CD4-positive, alpha-beta T cell (primary cell): ENCODE measurements at regions of chr7 and their contacts with region 1.

Region 1: DNA sequence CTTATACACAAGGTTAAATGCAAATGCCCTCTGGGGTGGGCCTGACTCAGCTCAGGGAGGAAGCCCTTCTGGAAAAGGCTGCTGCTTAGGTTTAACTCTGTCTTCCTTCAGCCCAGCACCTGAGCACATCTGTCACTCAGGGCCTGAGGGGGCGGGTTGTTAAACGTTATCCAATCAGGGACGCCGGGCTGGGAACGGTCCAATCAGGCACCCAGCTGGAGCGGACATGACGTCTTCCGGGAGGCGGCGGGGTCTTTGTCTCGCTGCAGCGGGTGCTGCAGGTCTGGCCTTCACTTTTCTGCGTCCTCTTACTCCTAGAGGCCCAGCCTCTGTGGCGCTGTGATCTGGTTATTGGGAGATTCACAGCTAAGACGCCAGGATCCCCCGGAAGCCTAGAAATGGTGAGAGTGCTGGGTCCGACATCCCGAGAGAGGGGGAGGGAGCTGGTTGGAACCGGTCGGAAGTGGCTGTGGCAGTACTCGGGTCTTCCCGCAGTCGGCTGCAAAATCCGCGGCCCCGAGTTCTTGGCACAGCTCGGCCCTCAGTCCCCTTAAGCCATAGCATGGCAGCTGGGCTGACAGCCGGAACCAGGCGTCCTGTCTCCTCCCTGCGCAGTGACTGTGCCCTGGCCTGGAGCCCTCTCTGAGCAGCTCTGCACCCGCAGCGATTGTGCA is at the start of gene ZNF138:
- DNase-seq: peak; percentile 86 to 96 (median 92)
- ATAC-seq: peak; percentile 99
- H3K4me3 ChIP-seq: peak within 1 kb of the TSS; percentile 98
- H3K4me3 Mint-ChIP-seq: peak within 1 kb of the TSS; percentile 98
- H3K27ac ChIP-seq: peak within 1 kb of the TSS; percentile 72 to 88
- H3K27ac Mint-ChIP-seq: peak within 1 kb of the TSS; percentile 98
- H3K4me1 ChIP-seq: peaks cover 27% of the 10 kb centered on the region
- H3K4me1 Mint-ChIP-seq: peaks cover 36% of the 10 kb centered on the region
- H3K27me3 ChIP-seq: no peaks in the 10 kb centered on the region
- H3K27me3 Mint-ChIP-seq: no peaks in the 10 kb centered on the region
- CTCF ChIP-seq: no peak
- total RNA-seq, gene ZNF138: 5.6 to 7.3 TPM

Region 2: GRCh38 chr7:64307254-64308015 is 486.9 kb before region 1 on chr7:
- CTCF ChIA-PET with region 1: no interaction called
- POLR2A ChIA-PET with region 1: interaction called, 15 read pairs
- intact Hi-C with region 1: loop called in 1 of 2 experiments (anchors 5 kb)
- DNase-seq: peak; percentile 89 to 98 (median 92)
- ATAC-seq: peak; percentile 98
- H3K4me3 ChIP-seq: peak overlapping the region; percentile 59
- H3K4me3 Mint-ChIP-seq: peak overlapping the region; percentile 98
- H3K27ac ChIP-seq: peak overlapping the region; percentile 65 to 83
- H3K27ac Mint-ChIP-seq: peak overlapping the region; percentile 96
- H3K4me1 ChIP-seq: peaks cover 13% of the 10 kb centered on the region
- H3K4me1 Mint-ChIP-seq: peaks cover 22% of the 10 kb centered on the region
- H3K27me3 ChIP-seq: no peaks in the 10 kb centered on the region
- H3K27me3 Mint-ChIP-seq: no peaks in the 10 kb centered on the region
- CTCF ChIP-seq: no peak

Region 3: GRCh38 chr7:64562626-64563275 is 231.6 kb before region 1 on chr7 and contains the start of gene ZNF680:
- CTCF ChIA-PET with region 1: no interaction called
- POLR2A ChIA-PET with region 1: interaction called, 6 read pairs
- intact Hi-C with region 1: loop called (anchors 5 kb)
- DNase-seq: peak; percentile 79 to 95 (median 84)
- ATAC-seq: peak; percentile 98
- H3K4me3 ChIP-seq: peak within 1 kb of the TSS; percentile 93
- H3K4me3 Mint-ChIP-seq: peak within 1 kb of the TSS; percentile 100
- H3K27ac ChIP-seq: peak within 1 kb of the TSS; percentile 41
- H3K27ac Mint-ChIP-seq: peak within 1 kb of the TSS; percentile 88
- H3K4me1 ChIP-seq: peaks cover 21% of the 10 kb centered on the region
- H3K4me1 Mint-ChIP-seq: peaks cover 41% of the 10 kb centered on the region
- H3K27me3 ChIP-seq: no peaks in the 10 kb centered on the region
- H3K27me3 Mint-ChIP-seq: no peaks in the 10 kb centered on the region
- CTCF ChIP-seq: no peak
- total RNA-seq, gene ZNF680: 8.3 to 8.9 TPM

Region 4: DNA sequence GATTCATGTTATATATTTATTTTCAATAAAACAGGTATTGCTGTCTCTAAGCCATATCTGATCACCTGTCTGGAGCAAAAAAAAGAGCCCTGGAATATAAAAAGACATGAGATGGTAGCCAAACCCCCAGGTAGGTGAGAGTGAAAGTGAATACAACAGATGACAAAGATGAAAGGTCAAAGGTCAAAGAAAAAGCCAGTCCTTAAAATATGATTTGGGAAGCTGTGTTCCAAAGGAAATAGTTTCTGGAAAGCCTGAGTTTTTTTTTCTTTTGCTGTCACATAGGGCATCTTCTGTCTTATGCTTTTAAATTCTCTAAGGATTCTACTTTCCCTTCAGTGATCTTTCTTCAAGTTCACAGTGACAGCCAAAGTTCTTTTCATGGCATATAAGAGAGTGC is 102.5 kb before region 1 on chr7:
- CTCF ChIA-PET with region 1: no interaction called
- POLR2A ChIA-PET with region 1: no interaction called
- intact Hi-C with region 1: loop called in 1 of 2 experiments (anchors 10 kb)
- DNase-seq: no peak
- ATAC-seq: no peak
- H3K4me3 ChIP-seq: no peak overlapping the region
- H3K4me3 Mint-ChIP-seq: no peak overlapping the region
- H3K27ac ChIP-seq: no peak overlapping the region
- H3K27ac Mint-ChIP-seq: peak overlapping the region; percentile 56
- H3K4me1 ChIP-seq: peaks cover 9% of the 10 kb centered on the region
- H3K4me1 Mint-ChIP-seq: peaks cover 13% of the 10 kb centered on the region
- H3K27me3 ChIP-seq: no peaks in the 10 kb centered on the region
- H3K27me3 Mint-ChIP-seq: no peaks in the 10 kb centered on the region
- CTCF ChIP-seq: no peak

Region 5: DNA sequence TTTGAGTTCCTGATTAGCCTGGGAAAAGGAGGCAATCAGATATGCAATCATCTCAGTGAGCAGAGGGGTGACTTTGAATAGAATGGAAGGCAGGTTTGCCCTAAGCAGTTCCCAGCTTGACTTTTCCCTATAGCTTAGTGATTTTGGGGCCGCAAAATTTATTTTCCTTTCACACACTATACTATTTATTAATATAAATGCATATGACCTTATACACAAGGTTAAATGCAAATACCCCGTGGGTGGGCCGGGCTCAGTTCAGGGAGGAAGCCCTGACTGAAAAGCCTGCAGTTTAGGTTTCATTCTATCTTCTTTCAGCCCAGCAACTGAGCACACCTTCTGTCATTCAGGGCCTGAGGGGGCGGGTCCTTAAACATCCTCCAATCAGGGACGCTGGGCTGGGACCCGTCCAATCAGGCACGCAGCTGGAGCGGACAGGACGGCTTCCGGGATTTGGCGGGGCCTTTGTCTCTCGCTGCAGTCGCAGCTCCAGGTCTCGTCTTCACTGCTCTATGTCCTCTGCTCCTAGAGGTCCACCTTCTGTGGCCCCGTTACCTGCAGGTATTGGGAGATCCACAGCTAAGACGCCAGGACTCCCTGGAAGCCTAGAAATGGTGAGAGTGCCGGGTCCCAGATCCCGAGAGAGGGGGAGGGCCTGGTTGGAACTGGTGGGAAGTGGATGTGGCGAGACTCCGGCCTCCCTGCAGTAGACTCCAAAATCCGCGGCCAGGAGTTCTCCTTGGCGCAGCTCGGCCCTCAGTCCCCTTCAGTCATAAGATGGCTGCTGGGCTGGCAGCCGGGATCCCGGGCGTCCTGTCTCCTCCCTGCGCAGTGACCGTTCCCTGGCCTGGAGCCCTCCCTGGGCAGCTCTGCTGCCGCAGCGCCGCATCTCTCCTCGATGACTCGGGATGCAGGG is 108.8 kb after region 1 on chr7 and contains the start of gene ZNF273:
- CTCF ChIA-PET with region 1: no interaction called
- POLR2A ChIA-PET with region 1: interaction called, 28 read pairs
- intact Hi-C with region 1: loop called (anchors 2 to 5 kb)
- DNase-seq: peak; percentile 83 to 95 (median 87)
- ATAC-seq: peak; percentile 99
- H3K4me3 ChIP-seq: peak within 1 kb of the TSS; percentile 81
- H3K4me3 Mint-ChIP-seq: peak within 1 kb of the TSS; percentile 99
- H3K27ac ChIP-seq: peak within 1 kb of the TSS; percentile 26 to 64
- H3K27ac Mint-ChIP-seq: peak within 1 kb of the TSS; percentile 94
- H3K4me1 ChIP-seq: peaks cover 14% of the 10 kb centered on the region
- H3K4me1 Mint-ChIP-seq: peaks cover 51% of the 10 kb centered on the region
- H3K27me3 ChIP-seq: no peaks in the 10 kb centered on the region
- H3K27me3 Mint-ChIP-seq: no peaks in the 10 kb centered on the region
- CTCF ChIP-seq: no peak
- total RNA-seq, gene ZNF273: 6.8 TPM

Region 6: DNA sequence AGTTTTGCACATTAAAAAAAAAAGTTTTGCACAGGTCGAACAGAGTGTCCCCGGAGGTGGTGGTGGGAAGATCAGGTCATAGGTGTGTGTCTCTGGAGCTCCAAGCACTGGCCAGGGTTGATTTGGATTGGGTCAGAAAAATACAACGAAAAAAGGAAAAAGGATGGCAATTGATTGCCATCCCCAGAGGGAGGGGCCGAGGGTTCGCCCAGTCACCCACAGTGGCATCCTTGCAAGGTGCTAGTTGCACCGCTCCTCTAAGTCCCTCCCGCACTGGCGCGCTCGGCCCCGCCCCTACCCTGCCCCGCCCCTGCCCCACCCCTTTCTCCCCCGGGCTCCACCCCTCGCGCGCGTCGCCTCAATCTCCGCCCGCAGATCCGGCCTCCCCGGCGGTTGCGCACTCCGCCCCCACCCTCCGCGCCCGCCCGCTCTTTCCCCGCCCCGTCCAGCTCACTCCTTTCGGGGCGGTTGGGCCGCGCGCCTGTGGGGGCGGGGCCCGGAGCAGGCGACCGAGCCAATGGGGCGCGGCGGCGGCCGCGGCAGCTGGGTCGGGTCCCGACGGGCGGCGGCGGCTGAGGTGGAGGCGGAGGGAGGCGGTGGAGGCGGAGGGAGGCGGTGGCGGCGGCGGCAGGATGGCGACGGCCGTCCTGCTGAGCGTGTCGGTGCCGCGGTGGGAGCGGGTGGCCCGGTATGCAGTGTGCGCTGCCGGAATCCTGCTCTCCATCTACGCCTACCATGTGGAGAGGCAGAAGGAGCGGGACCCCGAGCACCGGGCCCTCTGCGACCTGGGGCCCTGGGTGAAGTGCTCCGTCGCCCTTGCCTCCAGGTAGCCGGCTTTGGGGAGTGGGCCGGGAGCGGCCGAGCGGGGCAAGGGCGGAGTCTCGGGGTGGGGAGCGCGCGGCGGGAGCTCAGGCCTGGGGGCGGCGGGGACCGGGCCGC is 243.7 kb after region 1 on chr7:
- CTCF ChIA-PET with region 1: no interaction called
- POLR2A ChIA-PET with region 1: no interaction called
- intact Hi-C with region 1: loop called in 1 of 2 experiments (anchors 10 kb)
- DNase-seq: peak; percentile 88 to 98 (median 93)
- ATAC-seq: peak; percentile 87
- H3K4me3 ChIP-seq: peak overlapping the region; percentile 63
- H3K4me3 Mint-ChIP-seq: peak overlapping the region; percentile 86
- H3K27ac ChIP-seq: peak overlapping the region in 1 of 2 donors; percentile 56
- H3K27ac Mint-ChIP-seq: peak overlapping the region; percentile 57
- H3K4me1 ChIP-seq: peaks cover 5% of the 10 kb centered on the region
- H3K4me1 Mint-ChIP-seq: peaks cover 17% of the 10 kb centered on the region
- H3K27me3 ChIP-seq: no peaks in the 10 kb centered on the region
- H3K27me3 Mint-ChIP-seq: no peaks in the 10 kb centered on the region
- CTCF ChIP-seq: no peak